ENCODE measurements at regions of chr3 and their contacts with region 1.

Region 1: GRCh38 chr3:94875149-94875548 is 812.3 kb downstream of the NSUN3 start:
- DNase-seq: no peak
- ATAC-seq: no peak
- H3K4me3 ChIP-seq: no peak overlapping the region
- H3K27ac ChIP-seq: no peak overlapping the region
- H3K4me1 ChIP-seq: no peaks in the 10 kb centered on the region
- H3K27me3 ChIP-seq: no peaks in the 10 kb centered on the region
- CTCF ChIP-seq: no peak
- POLR2A ChIP-seq: no peak

Region 2: GRCh38 chr3:94990952-94991705 is 116.0 kb after region 1 on chr3:
- in situ Hi-C with region 1: loop called in 1 of 4 experiments (anchors 25 kb)
- intact Hi-C with region 1: no loop called
- DNase-seq: no peak
- ATAC-seq: no peak
- H3K4me3 ChIP-seq: no peak overlapping the region
- H3K27ac ChIP-seq: no peak overlapping the region
- H3K4me1 ChIP-seq: no peaks in the 10 kb centered on the region
- H3K27me3 ChIP-seq: no peaks in the 10 kb centered on the region
- CTCF ChIP-seq: no peak
- POLR2A ChIP-seq: no peak

Measured in gastrocnemius medialis (tissue), 4 donors.